ENCODE measurements at regions of chr6 and their contacts with region 1.

Region 1: GRCh38 chr6:26003102-26003694 is 40.6 kb downstream of the TRIM38 start:
- DNase-seq: no peak
- ATAC-seq: peak; percentile 65
- H3K4me3 ChIP-seq: no peak overlapping the region
- H3K27ac ChIP-seq: no peak overlapping the region
- H3K4me1 ChIP-seq: no peaks in the 10 kb centered on the region
- H3K27me3 ChIP-seq: no peaks in the 10 kb centered on the region
- CTCF ChIP-seq: peak; percentile 70 to 79 (median 71)
- EP300 ChIP-seq: no peak
- POLR2A ChIP-seq: no peak
- RAD21 ChIP-seq: peak; percentile 84

Region 2: DNA sequence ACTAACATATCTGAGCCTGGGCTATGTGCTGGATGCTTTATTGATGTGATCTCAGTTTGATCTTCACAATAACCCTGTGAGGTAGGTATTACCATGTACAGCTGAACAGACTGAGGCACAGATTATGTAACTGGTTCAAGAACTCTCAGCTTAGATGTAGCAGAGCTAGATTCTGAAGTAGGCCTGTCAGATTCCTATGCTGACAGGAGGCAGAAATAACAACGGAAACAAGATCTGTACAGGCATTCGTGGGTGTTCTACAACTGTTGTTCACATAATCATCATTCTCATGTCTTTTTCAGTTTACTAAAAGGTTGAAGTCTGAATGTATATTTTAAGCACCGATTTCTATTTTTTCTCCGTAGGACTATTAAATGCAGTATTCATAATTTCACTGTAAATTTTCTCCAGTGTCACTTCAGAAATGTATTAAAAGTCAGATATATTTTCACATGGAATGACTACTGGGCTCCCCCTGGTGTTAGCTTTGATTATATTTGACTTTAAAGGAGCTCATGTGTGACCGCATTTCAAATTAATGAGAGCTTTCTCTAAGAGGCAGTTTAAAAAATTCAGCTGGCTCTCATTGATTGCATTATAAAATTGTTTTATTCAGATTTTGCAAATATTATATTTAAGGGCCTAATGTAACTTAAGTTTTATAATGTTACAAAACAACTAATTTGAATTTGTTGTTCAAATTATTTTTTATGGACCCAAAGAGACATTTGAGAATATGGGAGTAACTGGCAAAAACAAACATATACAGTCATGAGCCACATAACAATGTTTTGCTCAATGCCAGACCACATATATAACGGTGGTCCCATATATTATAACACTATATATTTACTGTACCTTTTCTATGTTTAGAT is 285.1 kb before region 1 on chr6:
- CTCF ChIA-PET with region 1: interaction called, 85 read pairs
- POLR2A ChIA-PET with region 1: no interaction called
- RAD21 ChIA-PET with region 1: interaction called, 10 read pairs
- SMC1A ChIA-PET with region 1: interaction called, 28 read pairs
- in situ Hi-C with region 1: no loop called
- intact Hi-C with region 1: loop called (anchors 2 kb)
- DNase-seq: no peak
- ATAC-seq: 0 out of 3 replicates have a peak, but pooled peaks have one; percentile 34
- H3K4me3 ChIP-seq: no peak overlapping the region
- H3K27ac ChIP-seq: no peak overlapping the region
- H3K4me1 ChIP-seq: no peaks in the 10 kb centered on the region
- H3K27me3 ChIP-seq: peaks cover 0 to 3% of the 10 kb centered on the region in 2 experiments; a peak in 1 of 4 replicates
- CTCF ChIP-seq: peak; percentile 42 to 48 (median 47)
- EP300 ChIP-seq: no peak
- POLR2A ChIP-seq: no peak
- RAD21 ChIP-seq: 0 out of 2 replicates have a peak, but pooled peaks have one; percentile 32

Region 3: GRCh38 chr6:25788305-25788922 is 214.8 kb before region 1 on chr6:
- CTCF ChIA-PET with region 1: interaction called, 89 read pairs
- POLR2A ChIA-PET with region 1: no interaction called
- RAD21 ChIA-PET with region 1: interaction called, 9 read pairs
- SMC1A ChIA-PET with region 1: interaction called, 39 read pairs
- in situ Hi-C with region 1: loop called (anchors 5 kb)
- intact Hi-C with region 1: loop called (anchors 1 kb)
- DNase-seq: no peak
- ATAC-seq: peak; percentile 82
- H3K4me3 ChIP-seq: no peak overlapping the region
- H3K27ac ChIP-seq: no peak overlapping the region
- H3K4me1 ChIP-seq: no peaks in the 10 kb centered on the region
- H3K27me3 ChIP-seq: no peaks in the 10 kb centered on the region; a peak in 1 of 4 replicates
- CTCF ChIP-seq: peak; percentile 55 to 69 (median 56); a peak in 5 of 6 replicates
- EP300 ChIP-seq: no peak
- POLR2A ChIP-seq: no peak
- RAD21 ChIP-seq: peak; percentile 58

Region 4: DNA sequence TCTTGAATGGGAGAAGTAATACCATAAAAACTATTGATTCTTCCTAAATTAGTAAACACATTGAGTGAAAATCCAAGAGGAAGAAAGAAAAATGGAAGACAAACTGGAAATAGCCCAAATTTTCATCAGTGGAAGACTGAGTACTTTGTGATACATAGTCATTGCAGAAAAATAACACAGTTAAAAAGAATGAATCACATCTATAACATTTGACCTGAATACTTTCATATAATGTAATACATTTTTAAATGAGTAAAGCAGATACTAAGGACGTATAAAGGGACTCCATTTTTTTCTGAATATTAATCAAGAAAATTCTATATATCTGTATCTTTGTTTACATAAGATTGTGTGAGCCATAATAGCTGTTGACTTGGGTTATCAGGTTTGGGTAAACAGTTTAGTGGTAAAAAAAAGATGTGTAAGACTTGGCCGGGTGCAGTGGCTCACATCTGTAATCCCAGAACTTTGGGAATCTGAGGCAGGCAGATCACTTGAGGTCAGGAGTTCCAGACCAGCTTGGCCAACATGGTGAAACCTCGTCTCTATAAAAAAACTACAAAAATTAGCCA is 68.4 kb before region 1 on chr6:
- CTCF ChIA-PET with region 1: no interaction called
- POLR2A ChIA-PET with region 1: no interaction called
- RAD21 ChIA-PET with region 1: no interaction called
- SMC1A ChIA-PET with region 1: no interaction called
- in situ Hi-C with region 1: no loop called
- intact Hi-C with region 1: no loop called
- DNase-seq: no peak
- ATAC-seq: no peak
- H3K4me3 ChIP-seq: no peak overlapping the region
- H3K27ac ChIP-seq: no peak overlapping the region
- H3K4me1 ChIP-seq: no peaks in the 10 kb centered on the region
- H3K27me3 ChIP-seq: no peaks in the 10 kb centered on the region; a peak in 3 of 4 replicates
- CTCF ChIP-seq: no peak
- EP300 ChIP-seq: no peak
- POLR2A ChIP-seq: no peak
- RAD21 ChIP-seq: no peak

Region 5: GRCh38 chr6:25962149-25963127 is 40.8 kb before region 1 on chr6 and contains the start of gene TRIM38:
- CTCF ChIA-PET with region 1: interaction called, 46 read pairs
- POLR2A ChIA-PET with region 1: interaction called, 6 read pairs
- RAD21 ChIA-PET with region 1: interaction called, 7 read pairs
- SMC1A ChIA-PET with region 1: interaction called, 12 read pairs
- in situ Hi-C with region 1: no loop called
- intact Hi-C with region 1: no loop called
- DNase-seq: peak; percentile 85
- ATAC-seq: peak; percentile 84
- H3K4me3 ChIP-seq: peak within 1 kb of the TSS; percentile 99
- H3K27ac ChIP-seq: peak within 1 kb of the TSS; percentile 99
- H3K4me1 ChIP-seq: peaks cover 33% of the 10 kb centered on the region
- H3K27me3 ChIP-seq: no peaks in the 10 kb centered on the region
- CTCF ChIP-seq: no peak
- EP300 ChIP-seq: peak; percentile 46 to 64; a peak in 1 of 4 replicates
- POLR2A ChIP-seq: peak; percentile 91
- RAD21 ChIP-seq: no peak
- polyA plus RNA-seq, gene TRIM38: 4.5 to 5.9 TPM

Region 6: GRCh38 chr6:26020329-26021000 is 17.3 kb after region 1 on chr6:
- CTCF ChIA-PET with region 1: interaction called, 96 read pairs
- POLR2A ChIA-PET with region 1: interaction called, 11 read pairs
- RAD21 ChIA-PET with region 1: interaction called, 10 read pairs
- SMC1A ChIA-PET with region 1: interaction called, 18 read pairs
- in situ Hi-C with region 1: no loop called
- intact Hi-C with region 1: no loop called
- DNase-seq: peak; percentile 93
- ATAC-seq: peak; percentile 69
- H3K4me3 ChIP-seq: peak overlapping the region; percentile 74
- H3K27ac ChIP-seq: peak overlapping the region; percentile 98
- H3K4me1 ChIP-seq: peaks cover 8% of the 10 kb centered on the region
- H3K27me3 ChIP-seq: no peaks in the 10 kb centered on the region
- CTCF ChIP-seq: no peak
- EP300 ChIP-seq: peak in 1 of 2 experiments; percentile 19; a peak in 1 of 4 replicates
- POLR2A ChIP-seq: peak; percentile 98
- RAD21 ChIP-seq: no peak